ENCODE measurements at regions of chr7 and their contacts with region 1.

Region 1: GRCh38 chr7:67302113-67303039 is 305.7 kb downstream of the TYW1 start:
- DNase-seq: peak; percentile 96 to 99
- H3K4me3 ChIP-seq: peak overlapping the region; percentile 98
- H3K27ac ChIP-seq: peak overlapping the region; percentile 88
- H3K4me1 ChIP-seq: 0 out of 2 replicates have a peak, but pooled peaks cover 6% of the 10 kb centered on the region
- H3K27me3 ChIP-seq: no peaks in the 10 kb centered on the region
- CTCF ChIP-seq: no peak; the same call in 1 of the 2 replicates

Region 2: GRCh38 chr7:67251986-67252558 is 50.3 kb before region 1 on chr7:
- CTCF ChIA-PET with region 1: interaction called, 12 read pairs
- POLR2A ChIA-PET with region 1: interaction called, 8 read pairs
- intact Hi-C with region 1: no loop called
- DNase-seq: no peak
- H3K4me3 ChIP-seq: no peak overlapping the region
- H3K27ac ChIP-seq: no peak overlapping the region
- H3K4me1 ChIP-seq: no peaks in the 10 kb centered on the region
- H3K27me3 ChIP-seq: no peaks in the 10 kb centered on the region
- CTCF ChIP-seq: no peak